ENCODE measurements at regions of chr4 and their contacts with region 1.

Region 1: GRCh38 chr4:110245577-110245976 is 47.2 kb upstream of the ELOVL6 start:
- DNase-seq: no peak
- H3K4me3 ChIP-seq: no peak overlapping the region
- CTCF ChIP-seq: no peak

Region 2: DNA sequence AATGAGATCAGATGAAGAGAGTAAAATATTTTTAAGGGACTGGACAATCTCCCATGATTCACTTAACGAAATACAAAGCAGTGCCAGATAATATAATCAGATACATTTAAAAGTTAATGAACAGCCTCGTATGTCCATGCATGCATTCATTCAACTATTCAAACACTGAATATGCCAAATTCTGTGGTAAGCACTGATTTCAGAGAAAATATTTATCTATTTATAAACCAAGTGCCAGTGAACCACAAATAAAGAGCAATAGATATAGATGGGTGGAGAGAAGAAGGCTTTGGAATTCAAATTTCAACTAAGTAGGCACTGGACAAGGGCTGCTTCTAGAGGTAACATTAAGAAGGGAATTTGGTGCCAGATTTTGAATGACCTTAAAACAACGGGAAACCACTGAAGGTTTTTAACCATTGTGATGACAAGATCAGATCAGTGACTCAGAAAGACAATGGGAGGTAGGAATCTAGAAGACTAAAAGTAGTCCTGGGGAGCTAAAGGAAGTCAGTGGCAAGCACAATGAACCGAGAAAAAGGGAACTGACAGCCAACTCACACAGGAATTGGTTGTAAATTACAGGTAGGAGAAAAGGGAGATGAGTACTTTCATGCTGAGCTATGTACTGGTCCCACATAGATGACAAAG is 61.3 kb before region 1 on chr4:
- in situ Hi-C with region 1: loop called (anchors 10 kb)
- DNase-seq: no peak
- H3K4me3 ChIP-seq: no peak overlapping the region
- CTCF ChIP-seq: no peak

Region 3: GRCh38 chr4:110275871-110276270 is 30.3 kb after region 1 on chr4:
- in situ Hi-C with region 1: no loop called
- DNase-seq: peak; percentile 56
- H3K4me3 ChIP-seq: no peak overlapping the region
- CTCF ChIP-seq: no peak

Region 4: DNA sequence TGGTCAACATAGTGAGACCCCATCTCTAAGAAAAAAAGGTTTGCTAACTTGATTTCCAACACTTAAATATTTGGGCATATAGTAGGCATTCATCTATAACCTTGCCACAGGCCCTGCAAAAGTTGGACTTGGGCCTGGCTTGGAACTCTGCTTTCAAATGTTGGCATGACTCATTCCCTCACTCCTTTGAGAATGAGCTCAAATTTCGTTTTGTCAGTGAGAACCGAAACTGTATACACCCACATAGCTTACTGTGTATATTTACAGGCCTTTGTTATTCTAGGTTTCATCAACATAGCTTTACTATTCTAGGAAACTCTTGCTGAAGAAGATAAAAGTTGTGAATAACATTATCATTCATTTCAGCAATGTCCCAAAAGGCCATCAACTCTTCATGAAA is 41.6 kb after region 1 on chr4:
- in situ Hi-C with region 1: no loop called
- DNase-seq: peak; percentile 84
- H3K4me3 ChIP-seq: no peak overlapping the region
- CTCF ChIP-seq: no peak

Measured in astrocyte of the cerebellum (primary cell).